Ascending aorta (tissue), 2 donors: ENCODE measurements at regions of chr5 and their contacts with region 1.

Region 1: DNA sequence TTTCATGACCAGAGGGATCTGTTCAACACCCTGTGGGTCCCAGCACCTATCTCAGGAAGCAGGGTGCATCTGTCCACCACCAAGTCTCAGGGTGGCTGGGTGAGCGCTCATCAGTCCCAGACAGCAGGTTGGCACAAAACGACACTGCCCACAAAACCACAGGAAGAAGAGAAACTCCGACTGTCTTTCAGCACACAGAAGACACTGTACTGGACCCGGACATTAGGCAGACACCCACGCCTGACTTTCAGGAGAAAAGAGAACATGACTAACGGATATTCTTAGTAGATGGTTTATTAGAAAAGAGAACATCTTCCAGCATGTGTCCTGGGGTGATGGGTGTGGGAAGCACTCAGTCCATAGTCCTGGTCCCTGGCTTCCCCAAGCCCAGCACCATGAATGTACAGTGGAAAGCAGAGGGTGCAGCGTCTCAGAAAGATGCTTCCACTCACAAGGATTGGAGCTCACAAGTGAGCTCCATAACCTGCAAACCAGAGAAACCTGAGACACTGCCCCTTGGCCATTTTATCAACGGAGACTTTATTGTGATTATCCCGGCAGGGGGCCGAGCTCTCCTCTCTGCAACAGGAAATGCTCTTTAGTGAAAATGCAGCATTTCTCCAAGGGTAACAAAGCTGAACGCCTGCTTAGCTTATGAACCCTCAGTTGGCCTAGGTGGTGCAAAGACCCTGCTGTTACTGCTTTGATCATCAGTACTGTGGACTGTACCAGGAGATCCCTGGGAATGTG is 35.8 kb upstream of the LCP2 start:
- DNase-seq: peak in 1 of 2 donors; percentile 37
- H3K4me3 ChIP-seq: no peak overlapping the region
- H3K27ac ChIP-seq: no peak overlapping the region
- H3K4me1 ChIP-seq: peaks cover 0 to 14% of the 10 kb centered on the region in 2 donors
- H3K27me3 ChIP-seq: no peaks in the 10 kb centered on the region
- CTCF ChIP-seq: no peak

Region 2: GRCh38 chr5:170315154-170315553 is 18.2 kb before region 1 on chr5:
- intact Hi-C with region 1: loop called (anchors 1 kb)
- DNase-seq: peak; percentile 71 to 88
- H3K4me3 ChIP-seq: no peak overlapping the region
- H3K27ac ChIP-seq: peak overlapping the region; percentile 72 to 87
- H3K4me1 ChIP-seq: peaks cover 4 to 9% of the 10 kb centered on the region in 2 donors
- H3K27me3 ChIP-seq: no peaks in the 10 kb centered on the region
- CTCF ChIP-seq: no peak

Region 3: DNA sequence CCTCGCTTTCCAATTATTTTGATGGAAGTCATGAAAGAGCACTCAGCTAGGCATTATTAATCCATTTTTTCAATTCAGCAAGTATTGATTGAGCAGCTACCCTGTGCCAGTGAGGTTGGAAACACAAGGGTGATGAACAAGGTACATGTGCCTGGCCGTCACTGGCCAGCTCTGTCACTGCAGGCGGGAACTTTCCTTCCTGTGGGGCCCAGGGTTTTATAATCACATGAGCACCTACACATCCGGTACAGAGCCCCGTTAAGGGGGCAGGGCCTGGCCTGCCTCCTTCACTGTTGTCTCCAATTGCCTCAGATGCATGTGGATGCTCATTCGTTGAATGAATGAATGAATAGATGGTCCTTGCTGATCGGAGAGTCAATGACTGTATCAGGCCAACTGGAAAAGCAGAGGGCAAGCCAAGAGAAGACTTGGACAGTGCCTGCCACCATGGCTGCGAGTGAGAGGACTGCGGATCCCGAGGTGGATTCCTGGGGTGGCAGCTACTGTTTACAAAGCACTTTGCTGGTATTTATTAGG is 111.7 kb after region 1 on chr5:
- intact Hi-C with region 1: no loop called
- DNase-seq: no peak
- H3K4me3 ChIP-seq: no peak overlapping the region
- H3K27ac ChIP-seq: no peak overlapping the region
- H3K4me1 ChIP-seq: no peaks in the 10 kb centered on the region
- H3K27me3 ChIP-seq: no peaks in the 10 kb centered on the region
- CTCF ChIP-seq: no peak